Activated T-helper 2 cell treated with anti-CD3 and anti-CD28 coated beads, Interferon-gamma antibody, Interleukin-2, Interleukin-4, amounts not matched to agents 10 μg/mL and 5 μg/mL and 100 μg/mL, durations not matched to agents 14 hours and 24 hours and 36 hours (primary cell): ENCODE measurements at regions of chr1 and their contacts with region 1.

Region 1: DNA sequence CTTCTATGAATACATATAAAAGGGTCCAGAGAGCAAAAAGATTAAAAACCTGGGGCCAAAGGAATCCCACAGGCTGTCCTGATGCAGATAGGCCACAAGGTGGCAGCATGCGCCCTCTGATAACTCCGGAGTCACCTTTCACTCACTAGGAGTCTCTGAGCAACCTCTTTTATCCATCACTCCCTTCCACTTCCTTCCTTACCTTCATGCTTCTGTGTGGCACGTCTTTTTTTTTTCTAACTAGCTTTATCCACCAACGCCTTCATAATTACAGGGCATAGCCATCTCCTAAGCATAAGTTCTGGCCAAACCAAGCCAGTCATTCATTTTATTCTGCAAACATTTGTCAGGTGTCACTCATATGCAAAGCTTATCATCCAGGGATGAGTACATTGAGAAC is 3.9 kb upstream of the PGLYRP4 start:
- DNase-seq: peak; percentile 31
- H3K4me3 Mint-ChIP-seq: no peak overlapping the region
- H3K27ac Mint-ChIP-seq: no peak overlapping the region
- H3K4me1 Mint-ChIP-seq: no peaks in the 10 kb centered on the region
- H3K27me3 Mint-ChIP-seq: no peaks in the 10 kb centered on the region

Region 2: DNA sequence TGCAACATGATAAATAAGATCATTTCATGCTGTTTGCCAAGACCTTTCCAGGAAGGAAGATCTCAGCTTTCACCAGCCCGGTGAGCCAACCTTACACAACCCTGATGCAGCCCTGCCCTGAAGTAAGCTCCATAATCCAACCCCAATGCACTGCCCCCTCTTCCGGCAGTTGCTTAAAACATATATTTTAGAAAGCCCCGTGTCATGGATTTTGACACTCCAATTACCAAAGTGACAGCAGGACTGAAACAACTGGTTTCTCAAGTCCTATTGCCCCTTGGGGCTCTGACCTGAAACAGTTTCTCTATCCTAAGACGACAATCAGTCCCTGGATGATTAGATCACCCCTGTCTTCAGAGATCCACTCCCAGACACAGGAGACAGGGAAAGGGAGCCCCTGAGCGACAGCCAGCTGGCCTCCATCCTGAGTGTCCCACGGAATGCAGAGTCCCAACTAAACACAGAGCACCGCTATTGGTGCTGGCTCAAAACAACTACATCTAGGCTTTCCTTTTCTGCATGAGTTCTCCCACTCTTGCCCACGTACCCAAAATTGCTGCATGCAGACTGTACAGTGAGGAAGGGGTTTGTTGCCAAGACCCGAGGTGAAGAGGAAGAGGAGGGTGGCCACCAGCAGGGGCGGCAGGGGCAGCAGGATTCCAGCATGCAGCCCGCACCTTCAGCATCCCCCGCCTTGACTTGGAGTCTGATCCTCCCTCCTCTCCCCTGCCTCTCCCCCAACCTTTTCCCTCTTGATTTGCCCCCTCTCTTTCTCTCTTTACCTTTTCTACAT is 13.0 kb after region 1 on chr1:
- intact Hi-C with region 1: no loop called
- DNase-seq: no peak
- H3K4me3 Mint-ChIP-seq: no peak overlapping the region
- H3K27ac Mint-ChIP-seq: no peak overlapping the region
- H3K4me1 Mint-ChIP-seq: no peaks in the 10 kb centered on the region
- H3K27me3 Mint-ChIP-seq: no peaks in the 10 kb centered on the region

Region 3: GRCh38 chr1:153404768-153405167 is 52.2 kb after region 1 on chr1:
- intact Hi-C with region 1: loop called (anchors 10 kb)
- DNase-seq: peak; percentile 27
- H3K4me3 Mint-ChIP-seq: no peak overlapping the region
- H3K27ac Mint-ChIP-seq: no peak overlapping the region
- H3K4me1 Mint-ChIP-seq: peaks cover 3% of the 10 kb centered on the region
- H3K27me3 Mint-ChIP-seq: peaks cover 7% of the 10 kb centered on the region

Region 4: GRCh38 chr1:153494976-153495535 is 142.5 kb after region 1 on chr1:
- intact Hi-C with region 1: loop called (anchors 1 kb)
- DNase-seq: peak; percentile 59
- H3K4me3 Mint-ChIP-seq: no peak overlapping the region
- H3K27ac Mint-ChIP-seq: no peak overlapping the region
- H3K4me1 Mint-ChIP-seq: no peaks in the 10 kb centered on the region
- H3K27me3 Mint-ChIP-seq: peaks cover 37% of the 10 kb centered on the region

Region 5: GRCh38 chr1:153977250-153978240 is 625.0 kb after region 1 on chr1 and contains the start of gene JTB:
- intact Hi-C with region 1: no loop called
- DNase-seq: peak; percentile 78
- H3K4me3 Mint-ChIP-seq: peak within 1 kb of the TSS; percentile 97
- H3K27ac Mint-ChIP-seq: peak within 1 kb of the TSS; percentile 97
- H3K4me1 Mint-ChIP-seq: peaks cover 27% of the 10 kb centered on the region
- H3K27me3 Mint-ChIP-seq: no peaks in the 10 kb centered on the region
- total RNA-seq, gene JTB: 148 and 152 TPM in 2 replicates